Activated B cell treated with CpG ODN at 0.5 μM for 24 hours (primary cell): ENCODE measurements at regions of chr1 and their contacts with region 1.

Region 1: DNA sequence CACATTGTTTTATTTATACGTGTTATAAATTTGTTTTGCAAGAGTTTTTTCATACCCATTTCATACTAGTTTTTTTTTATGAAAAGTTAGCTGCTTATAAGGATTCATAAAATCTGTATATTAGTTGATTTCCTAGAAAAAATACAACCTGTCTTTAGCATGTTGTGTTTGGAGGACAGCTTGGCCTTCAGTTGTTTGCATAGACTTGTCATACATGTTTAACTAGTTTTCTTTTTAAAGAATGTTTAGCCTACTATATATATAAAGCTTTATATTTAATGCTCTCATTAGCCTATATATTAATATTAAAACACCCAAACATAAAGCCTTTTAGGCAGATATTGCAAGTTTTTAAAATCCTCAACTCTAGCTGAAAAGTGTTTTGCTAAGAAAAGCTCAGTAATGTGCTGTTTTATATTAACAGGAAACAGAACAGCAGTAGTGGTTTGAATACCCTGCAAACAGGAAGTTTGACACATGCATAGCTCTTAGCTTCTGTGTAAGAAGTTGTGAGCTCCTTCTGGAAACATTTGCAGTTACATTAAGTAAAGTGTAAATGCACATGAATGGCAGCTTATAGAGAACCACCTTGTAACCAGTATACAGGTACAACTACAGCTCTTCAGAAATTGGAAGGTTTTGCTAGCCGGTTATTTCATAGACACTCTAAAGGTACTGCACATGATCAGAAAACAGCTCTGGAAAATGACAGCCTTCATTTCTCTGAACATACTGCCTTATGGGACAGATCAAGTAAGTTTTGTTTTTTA is at the start of gene PRKACB:
- DNase-seq: no peak
- ATAC-seq: peak; percentile 86
- H3K4me3 Mint-ChIP-seq: peak within 1 kb of the TSS; percentile 89
- H3K27ac Mint-ChIP-seq: peak within 1 kb of the TSS; percentile 97
- H3K4me1 Mint-ChIP-seq: peaks cover 52% of the 10 kb centered on the region
- H3K27me3 Mint-ChIP-seq: no peaks in the 10 kb centered on the region
- CTCF ChIP-seq: no peak
- total RNA-seq, gene PRKACB: 30.0 and 33.0 TPM in 2 replicates

Region 2: GRCh38 chr1:83959824-83960498 is 184.0 kb before region 1 on chr1:
- CTCF ChIA-PET with region 1: no interaction called
- POLR2A ChIA-PET with region 1: no interaction called
- intact Hi-C with region 1: no loop called
- DNase-seq: no peak
- ATAC-seq: no peak
- H3K4me3 Mint-ChIP-seq: no peak overlapping the region
- H3K27ac Mint-ChIP-seq: no peak overlapping the region
- H3K4me1 Mint-ChIP-seq: no peaks in the 10 kb centered on the region
- H3K27me3 Mint-ChIP-seq: peaks cover 4% of the 10 kb centered on the region
- CTCF ChIP-seq: no peak

Region 3: DNA sequence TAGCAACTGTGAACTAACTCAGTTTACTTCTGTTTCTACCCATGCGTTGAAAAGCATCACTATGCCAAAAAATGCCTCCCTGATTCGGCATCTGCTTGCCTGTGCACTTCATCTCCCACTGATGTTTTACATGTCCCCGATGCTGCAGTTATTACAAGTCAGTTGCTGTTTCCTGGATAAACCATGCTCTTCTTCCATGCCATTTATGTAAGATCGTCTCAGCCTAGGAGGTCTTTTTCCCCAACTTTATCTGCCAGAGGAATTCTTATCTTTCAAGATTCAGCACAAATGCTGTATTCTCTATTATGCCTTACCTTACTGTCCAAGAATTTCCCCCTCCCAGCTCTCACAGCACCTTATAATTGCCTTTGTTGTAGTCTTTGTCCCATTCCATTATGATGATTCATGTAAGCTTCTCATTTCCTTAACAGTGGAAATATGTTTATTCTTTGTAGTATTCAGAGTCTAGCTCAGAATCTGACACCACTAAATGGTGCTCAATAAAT is 30.1 kb after region 1 on chr1:
- CTCF ChIA-PET with region 1: interaction called, 3 read pairs
- POLR2A ChIA-PET with region 1: no interaction called
- intact Hi-C with region 1: loop called (anchors 5 kb)
- DNase-seq: no peak
- ATAC-seq: no peak
- H3K4me3 Mint-ChIP-seq: no peak overlapping the region
- H3K27ac Mint-ChIP-seq: no peak overlapping the region
- H3K4me1 Mint-ChIP-seq: peaks cover 36% of the 10 kb centered on the region
- H3K27me3 Mint-ChIP-seq: no peaks in the 10 kb centered on the region
- CTCF ChIP-seq: no peak

Region 4: DNA sequence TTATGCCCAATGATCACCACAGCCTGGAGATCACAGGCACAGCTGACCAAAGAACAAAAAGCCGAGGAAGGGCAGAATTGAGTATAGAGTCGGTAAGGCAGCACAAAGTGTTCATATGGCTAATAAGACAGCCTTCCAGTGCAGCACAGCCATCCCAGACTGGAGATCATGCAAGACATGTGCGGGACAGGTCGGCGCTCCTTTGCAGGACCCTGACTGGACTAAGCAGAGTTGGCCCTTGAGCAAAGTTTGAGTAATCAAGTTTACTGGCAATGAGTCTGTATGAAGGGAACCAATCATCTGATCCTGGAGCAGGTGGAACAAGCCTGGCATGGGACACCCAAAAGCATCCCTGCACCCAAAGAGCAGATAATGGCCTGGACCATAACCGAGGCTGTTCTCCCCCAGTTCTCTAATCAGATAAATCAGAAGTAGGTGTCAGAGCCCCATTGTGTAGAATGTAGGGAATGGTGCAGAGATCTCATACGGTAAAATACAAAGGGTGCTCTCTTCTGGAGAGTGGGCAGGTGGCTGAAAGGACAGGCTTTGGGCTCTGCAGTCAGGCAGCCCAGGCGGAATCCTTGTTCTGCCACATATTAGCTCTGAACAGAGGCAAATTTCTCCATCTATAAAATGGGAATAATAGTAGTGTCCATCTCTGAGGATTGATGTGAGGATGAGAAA is 243.6 kb after region 1 on chr1:
- CTCF ChIA-PET with region 1: interaction called, 4 read pairs
- POLR2A ChIA-PET with region 1: no interaction called
- intact Hi-C with region 1: loop called (anchors 1 kb)
- DNase-seq: no peak
- ATAC-seq: no peak
- H3K4me3 Mint-ChIP-seq: no peak overlapping the region
- H3K27ac Mint-ChIP-seq: no peak overlapping the region
- H3K4me1 Mint-ChIP-seq: peaks cover 4% of the 10 kb centered on the region
- H3K27me3 Mint-ChIP-seq: peaks cover 5% of the 10 kb centered on the region
- CTCF ChIP-seq: no peak

Region 5: DNA sequence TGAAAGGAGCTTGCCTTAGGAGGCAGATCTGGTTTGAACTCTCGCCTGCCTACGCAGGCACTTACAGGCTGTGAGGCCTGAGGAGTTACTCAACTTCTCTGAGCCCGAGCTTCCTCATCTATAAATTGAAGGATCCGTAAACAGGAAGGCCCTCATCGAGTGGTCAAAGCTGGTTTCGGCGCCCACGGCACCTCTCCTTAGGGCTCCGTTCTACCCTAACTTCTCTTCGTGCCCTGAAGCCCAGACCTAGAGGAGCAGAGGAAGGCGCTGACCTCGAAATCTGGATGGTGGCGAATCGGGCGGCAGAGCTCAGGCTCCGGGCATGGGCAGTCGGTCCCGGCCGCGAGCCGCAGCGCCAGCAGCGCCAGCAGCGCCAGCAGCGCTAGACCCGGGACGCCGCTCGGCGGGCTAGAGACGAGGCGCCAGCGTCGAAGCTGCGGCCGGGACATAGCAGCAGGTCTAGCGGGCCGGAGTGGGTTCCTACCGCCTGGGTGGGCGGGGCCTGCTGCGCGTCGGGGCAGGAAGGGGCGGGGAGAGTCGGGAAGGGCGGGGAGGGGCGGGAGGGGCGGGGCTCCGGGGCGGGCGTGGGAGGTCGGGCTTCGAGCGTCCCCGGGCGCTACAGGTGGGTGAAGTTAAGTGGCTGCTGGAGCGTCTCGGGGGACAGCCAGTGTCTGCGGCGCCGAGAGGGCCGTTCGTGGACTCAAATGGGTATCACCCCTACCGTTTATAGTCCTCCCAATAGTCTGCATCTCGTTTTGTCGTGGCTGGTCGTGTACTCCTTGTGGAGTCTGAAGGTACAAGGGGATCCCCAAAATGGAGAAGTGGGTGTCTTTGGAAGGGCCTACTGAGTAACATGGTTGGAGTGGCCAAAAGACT is 430.2 kb after region 1 on chr1 and contains the start of gene CTBS:
- CTCF ChIA-PET with region 1: interaction called, 4 read pairs
- POLR2A ChIA-PET with region 1: interaction called, 27 read pairs
- intact Hi-C with region 1: loop called (anchors 2 kb)
- DNase-seq: peak; percentile 81
- ATAC-seq: peak; percentile 91
- H3K4me3 Mint-ChIP-seq: peak within 1 kb of the TSS; percentile 96
- H3K27ac Mint-ChIP-seq: peak within 1 kb of the TSS; percentile 99
- H3K4me1 Mint-ChIP-seq: peaks cover 40% of the 10 kb centered on the region
- H3K27me3 Mint-ChIP-seq: no peaks in the 10 kb centered on the region
- CTCF ChIP-seq: no peak
- total RNA-seq, gene CTBS: 11.8 and 13.2 TPM in 2 replicates

Region 6: GRCh38 chr1:84724128-84724860 is 580.3 kb after region 1 on chr1:
- CTCF ChIA-PET with region 1: interaction called, 12 read pairs
- POLR2A ChIA-PET with region 1: no interaction called
- intact Hi-C with region 1: loop called (anchors 1 kb)
- DNase-seq: peak; percentile 23
- ATAC-seq: peak; percentile 56
- H3K4me3 Mint-ChIP-seq: no peak overlapping the region
- H3K27ac Mint-ChIP-seq: no peak overlapping the region
- H3K4me1 Mint-ChIP-seq: no peaks in the 10 kb centered on the region
- H3K27me3 Mint-ChIP-seq: peaks cover 5% of the 10 kb centered on the region
- CTCF ChIP-seq: no peak

Region 7: GRCh38 chr1:84936116-84936810 is 792.3 kb after region 1 on chr1:
- CTCF ChIA-PET with region 1: no interaction called
- POLR2A ChIA-PET with region 1: no interaction called
- intact Hi-C with region 1: loop called (anchors 2 kb)
- DNase-seq: no peak
- ATAC-seq: peak; percentile 70
- H3K4me3 Mint-ChIP-seq: no peak overlapping the region
- H3K27ac Mint-ChIP-seq: no peak overlapping the region
- H3K4me1 Mint-ChIP-seq: peaks cover 4% of the 10 kb centered on the region
- H3K27me3 Mint-ChIP-seq: no peaks in the 10 kb centered on the region
- CTCF ChIP-seq: peak; percentile 99